Sciatic nerve (tissue), 2 donors: ENCODE measurements at regions of chr7 and their contacts with region 1.

Region 1: GRCh38 chr7:26479581-26479980 is 187.9 kb downstream of the SNX10 start:
- DNase-seq: no peak
- ATAC-seq: no peak

Region 2: DNA sequence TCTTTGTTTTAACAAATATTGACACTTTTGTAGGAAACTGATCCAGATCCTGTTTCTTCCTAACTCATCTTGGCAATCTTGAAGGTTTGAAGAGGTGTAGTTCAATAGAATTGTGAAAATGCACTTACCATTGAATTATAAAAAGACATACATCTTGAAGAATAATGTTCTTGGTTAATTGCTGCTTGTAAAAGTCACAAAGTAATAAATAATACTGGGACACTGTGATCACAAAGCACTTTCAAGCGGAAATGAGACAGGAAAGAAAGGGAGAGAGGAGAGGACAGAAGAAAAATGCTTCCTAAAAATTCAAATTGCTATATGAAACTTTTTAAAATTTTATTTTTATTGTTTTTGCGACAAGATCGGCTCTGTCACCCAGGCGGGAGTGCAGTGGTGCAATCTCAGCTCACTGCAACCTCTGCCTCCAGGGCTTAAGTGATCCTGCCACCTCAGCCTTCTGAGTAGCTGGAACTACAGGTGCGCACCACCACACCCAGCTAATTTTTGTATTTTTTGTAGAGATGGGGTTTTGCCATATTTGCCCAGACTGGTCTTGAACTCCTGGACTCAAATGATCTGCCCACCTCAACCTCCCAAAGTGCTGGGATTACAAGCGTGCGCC is 342.6 kb before region 1 on chr7:
- intact Hi-C with region 1: loop called (anchors 10 kb)
- DNase-seq: no peak
- ATAC-seq: no peak